B cell (primary cell): ENCODE measurements at regions of chr12 and their contacts with region 1.

Region 1: GRCh38 chr12:123601602-123602489 is at the start of gene DDX55:
- DNase-seq: peak; percentile 93
- ATAC-seq: peak; percentile 89
- H3K4me3 ChIP-seq: peak within 1 kb of the TSS; percentile 62 to 99 (median 93)
- H3K4me3 Mint-ChIP-seq: peak within 1 kb of the TSS; percentile 99
- H3K27ac ChIP-seq: peak within 1 kb of the TSS; percentile 74 to 85
- H3K27ac Mint-ChIP-seq: peak within 1 kb of the TSS; percentile 97
- H3K4me1 ChIP-seq: peaks cover 12 to 23% of the 10 kb centered on the region in 2 donors
- H3K4me1 Mint-ChIP-seq: peaks cover 23% of the 10 kb centered on the region
- H3K27me3 ChIP-seq: no peaks in the 10 kb centered on the region
- H3K27me3 Mint-ChIP-seq: no peaks in the 10 kb centered on the region
- CTCF ChIP-seq: peak; percentile 40
- total RNA-seq, gene DDX55: 33.3 and 35.6 TPM in 2 replicates

Region 2: GRCh38 chr12:123278101-123278627 is 323.7 kb before region 1 on chr12:
- CTCF ChIA-PET with region 1: no interaction called
- POLR2A ChIA-PET with region 1: interaction called, 10 read pairs
- intact Hi-C with region 1: no loop called
- DNase-seq: peak; percentile 78
- ATAC-seq: peak; percentile 81
- H3K4me3 ChIP-seq: no peak overlapping the region
- H3K4me3 Mint-ChIP-seq: peak overlapping the region; percentile 27
- H3K27ac ChIP-seq: peak overlapping the region in 1 of 2 donors; percentile 55
- H3K27ac Mint-ChIP-seq: peak overlapping the region; percentile 53
- H3K4me1 ChIP-seq: peaks cover 0 to 13% of the 10 kb centered on the region in 2 donors
- H3K4me1 Mint-ChIP-seq: peaks cover 6% of the 10 kb centered on the region
- H3K27me3 ChIP-seq: no peaks in the 10 kb centered on the region
- H3K27me3 Mint-ChIP-seq: no peaks in the 10 kb centered on the region
- CTCF ChIP-seq: no peak

Region 3: GRCh38 chr12:123388177-123388947 is 213.5 kb before region 1 on chr12:
- CTCF ChIA-PET with region 1: no interaction called
- POLR2A ChIA-PET with region 1: interaction called, 3 read pairs
- intact Hi-C with region 1: loop called (anchors 5 kb)
- DNase-seq: peak; percentile 85
- ATAC-seq: peak; percentile 62
- H3K4me3 ChIP-seq: peak overlapping the region; percentile 60 to 78 (median 63)
- H3K4me3 Mint-ChIP-seq: peak overlapping the region; percentile 91
- H3K27ac ChIP-seq: peak overlapping the region; percentile 74 to 80
- H3K27ac Mint-ChIP-seq: peak overlapping the region; percentile 93
- H3K4me1 ChIP-seq: peaks cover 22 to 36% of the 10 kb centered on the region in 2 donors
- H3K4me1 Mint-ChIP-seq: peaks cover 38% of the 10 kb centered on the region
- H3K27me3 ChIP-seq: no peaks in the 10 kb centered on the region
- H3K27me3 Mint-ChIP-seq: no peaks in the 10 kb centered on the region
- CTCF ChIP-seq: peak; percentile 9